Stomach (tissue), 19 donors: ENCODE measurements at regions of chr12 and their contacts with region 1.

Region 1: GRCh38 chr12:50174971-50175715 is 8.0 kb upstream of the CERS5 start:
- DNase-seq: peak in 1 of 2 donors; percentile 92
- H3K4me3 ChIP-seq: no peak overlapping the region
- H3K27ac ChIP-seq: no peak overlapping the region
- H3K4me1 ChIP-seq: no peaks in the 10 kb centered on the region
- H3K27me3 ChIP-seq: no peaks in the 10 kb centered on the region
- CTCF ChIP-seq: peak in 5 of 7 experiments; percentile 41 to 68 (median 65)
- EP300 ChIP-seq: no peak
- POLR2A ChIP-seq: no peak

Region 2: GRCh38 chr12:49893753-49894752 is 281.1 kb before region 1 on chr12:
- intact Hi-C with region 1: no loop called
- DNase-seq: peak; percentile 68 to 71
- H3K4me3 ChIP-seq: no peak overlapping the region
- H3K27ac ChIP-seq: peak overlapping the region in 4 of 5 donors; percentile 17 to 74 (median 46)
- H3K4me1 ChIP-seq: peaks cover 0 to 38% (median 16%) of the 10 kb centered on the region in 4 donors
- H3K27me3 ChIP-seq: peaks cover 0 to 5% (median 0%) of the 10 kb centered on the region in 3 donors
- CTCF ChIP-seq: no peak
- EP300 ChIP-seq: no peak
- POLR2A ChIP-seq: no peak

Region 3: GRCh38 chr12:50025187-50026059 is 149.7 kb before region 1 on chr12 and contains the start of gene RACGAP1:
- intact Hi-C with region 1: no loop called
- DNase-seq: peak; percentile 96 to 100
- H3K4me3 ChIP-seq: peak within 1 kb of the TSS; percentile 65 to 91 (median 84)
- H3K27ac ChIP-seq: peak within 1 kb of the TSS; percentile 63 to 86 (median 72)
- H3K4me1 ChIP-seq: peaks cover 0 to 25% (median 14%) of the 10 kb centered on the region in 4 donors
- H3K27me3 ChIP-seq: no peaks in the 10 kb centered on the region
- CTCF ChIP-seq: no peak
- EP300 ChIP-seq: no peak
- POLR2A ChIP-seq: no peak
- total RNA-seq, gene RACGAP1: 9.3 to 36.7 (median 12.9) TPM

Region 4: DNA sequence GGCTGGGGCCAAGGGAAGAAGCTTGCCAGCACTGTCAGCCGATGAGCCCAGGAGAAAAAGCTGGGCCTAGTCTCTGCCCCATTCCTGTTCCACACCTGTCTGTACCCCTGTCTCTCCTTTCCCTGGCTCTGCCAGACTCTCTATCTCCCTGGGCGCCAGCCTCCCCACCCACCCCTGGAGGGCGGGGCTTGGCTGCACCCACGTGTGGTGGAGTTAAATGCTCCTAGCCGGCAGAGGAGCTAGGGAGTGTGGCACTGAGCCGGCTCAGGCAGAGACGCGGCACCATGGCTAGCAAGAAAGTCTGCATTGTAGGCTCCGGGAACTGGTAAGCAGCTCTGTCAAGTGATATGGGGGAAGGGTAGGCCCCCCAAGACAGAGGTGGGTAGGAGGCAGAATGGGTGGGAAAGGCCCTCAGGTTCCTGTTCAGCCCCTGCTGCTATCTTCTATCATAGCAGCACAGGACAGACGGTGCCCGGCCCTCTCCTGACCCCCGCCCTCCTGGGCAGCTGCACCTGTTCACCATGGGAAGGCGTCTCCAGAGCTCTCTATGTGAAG is 71.3 kb before region 1 on chr12 and contains the start of gene GPD1:
- intact Hi-C with region 1: loop called (anchors 10 kb)
- DNase-seq: peak; percentile 90 to 91
- H3K4me3 ChIP-seq: peak within 1 kb of the TSS in 2 of 4 donors; percentile 12 to 18
- H3K27ac ChIP-seq: peak within 1 kb of the TSS in 3 of 5 donors; percentile 20 to 50 (median 47)
- H3K4me1 ChIP-seq: peaks cover 13 to 31% (median 24%) of the 10 kb centered on the region in 4 donors
- H3K27me3 ChIP-seq: no peaks in the 10 kb centered on the region
- CTCF ChIP-seq: no peak
- EP300 ChIP-seq: no peak
- POLR2A ChIP-seq: no peak
- total RNA-seq, gene GPD1: 0.58 to 9.5 (median 5.9) TPM

Region 5: DNA sequence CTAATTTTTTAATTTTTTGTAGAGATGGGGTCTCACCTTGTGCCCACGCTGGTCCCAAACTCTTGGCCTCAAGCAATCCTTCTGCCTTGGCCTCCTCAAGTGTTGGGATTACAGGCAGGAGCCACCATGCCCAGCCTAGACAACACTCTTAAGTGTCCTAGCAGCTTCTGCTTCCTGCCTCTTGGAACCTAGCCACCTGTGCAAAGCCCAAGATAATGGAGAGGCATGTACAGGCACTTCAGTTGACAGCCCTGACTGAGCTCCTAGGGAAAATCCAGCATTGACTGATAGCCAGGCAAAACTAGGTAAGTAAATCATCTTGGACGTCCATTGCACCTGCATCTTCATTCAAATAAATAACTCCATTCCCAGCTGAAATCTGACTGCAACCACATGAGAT is 47.6 kb before region 1 on chr12:
- intact Hi-C with region 1: no loop called
- DNase-seq: no peak
- H3K4me3 ChIP-seq: no peak overlapping the region
- H3K27ac ChIP-seq: no peak overlapping the region
- H3K4me1 ChIP-seq: peaks cover 0 to 16% (median 8%) of the 10 kb centered on the region in 4 donors
- H3K27me3 ChIP-seq: no peaks in the 10 kb centered on the region
- CTCF ChIP-seq: no peak
- EP300 ChIP-seq: no peak
- POLR2A ChIP-seq: no peak